ENCODE measurements at regions of chr9 and their contacts with region 1.

Region 1: DNA sequence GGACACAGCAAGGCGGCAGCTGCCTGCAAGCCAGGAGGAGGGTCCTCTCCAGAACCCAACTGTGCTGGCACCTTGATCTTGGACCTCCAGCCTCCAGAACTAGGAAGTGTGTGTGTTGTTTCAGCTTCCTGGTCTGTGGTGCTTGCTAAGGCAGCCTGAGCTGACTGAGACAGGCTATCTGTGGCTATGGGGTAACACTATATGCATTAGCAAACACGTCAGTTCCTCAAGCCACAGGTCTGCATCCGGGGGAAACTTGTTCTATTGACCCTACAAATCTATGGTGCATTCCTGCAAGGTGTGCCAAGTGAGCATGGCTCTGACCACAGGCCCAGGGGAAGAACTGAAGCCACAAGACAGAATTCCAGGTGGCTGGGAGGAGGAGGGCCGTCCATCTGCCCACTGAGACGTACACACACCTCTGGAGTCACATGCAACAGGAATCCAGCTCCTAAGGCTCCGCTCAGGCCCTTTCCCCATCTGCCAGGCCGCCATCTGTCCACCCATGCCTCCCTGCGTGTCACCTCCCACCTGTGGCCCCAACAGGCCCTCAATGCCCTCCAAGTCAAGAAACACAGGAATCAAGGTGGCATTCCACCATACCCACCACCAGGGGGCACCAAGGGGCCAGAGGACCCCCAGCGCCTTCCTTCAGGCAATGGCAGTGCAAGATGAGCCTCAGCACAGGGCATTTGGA is 174.9 kb downstream of the ROR2 start:
- DNase-seq: peak; percentile 75
- ATAC-seq: peak; percentile 63

Region 2: DNA sequence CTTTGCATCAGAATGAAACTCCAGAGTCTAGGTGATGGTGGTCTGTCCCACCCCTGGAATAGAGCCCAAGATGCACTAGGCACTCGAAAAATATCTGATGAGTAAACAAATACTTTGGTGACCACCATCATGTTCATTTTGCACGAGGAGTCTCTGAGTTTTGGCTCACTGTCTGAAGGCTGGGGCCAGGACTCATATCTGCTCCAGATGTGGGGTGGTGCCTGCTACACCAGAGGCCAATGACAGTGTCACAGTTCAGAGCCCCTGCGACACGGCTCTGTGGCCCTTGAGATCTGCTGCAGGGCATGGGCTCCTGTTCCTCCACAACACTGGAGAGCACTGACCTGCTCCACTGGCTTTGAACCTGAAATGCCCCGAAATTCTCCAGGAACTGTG is 10.3 kb after region 1 on chr9:
- intact Hi-C with region 1: no loop called
- DNase-seq: no peak
- ATAC-seq: no peak

Region 3: GRCh38 chr9:91949946-91950664 is 174.9 kb after region 1 on chr9 and contains the start of gene ROR2:
- intact Hi-C with region 1: loop called (anchors 2 kb)
- DNase-seq: peak; percentile 77
- ATAC-seq: peak; percentile 92
- total RNA-seq, gene ROR2: 0.92 TPM

Measured in Right ventricle myocardium inferior (tissue), 1 donor.